Gastrocnemius medialis (tissue), 4 donors: ENCODE measurements at regions of chr9 and their contacts with region 1.

Region 1: GRCh38 chr9:110650991-110651411 is 17.6 kb upstream of the MUSK start:
- DNase-seq: no peak
- ATAC-seq: peak in 1 of 2 donors; percentile 18
- H3K4me3 ChIP-seq: no peak overlapping the region
- H3K27ac ChIP-seq: peak overlapping the region; percentile 43 to 63 (median 52)
- H3K4me1 ChIP-seq: peaks cover 4 to 8% of the 10 kb centered on the region in 2 donors
- H3K27me3 ChIP-seq: no peaks in the 10 kb centered on the region
- CTCF ChIP-seq: no peak
- POLR2A ChIP-seq: no peak

Region 2: DNA sequence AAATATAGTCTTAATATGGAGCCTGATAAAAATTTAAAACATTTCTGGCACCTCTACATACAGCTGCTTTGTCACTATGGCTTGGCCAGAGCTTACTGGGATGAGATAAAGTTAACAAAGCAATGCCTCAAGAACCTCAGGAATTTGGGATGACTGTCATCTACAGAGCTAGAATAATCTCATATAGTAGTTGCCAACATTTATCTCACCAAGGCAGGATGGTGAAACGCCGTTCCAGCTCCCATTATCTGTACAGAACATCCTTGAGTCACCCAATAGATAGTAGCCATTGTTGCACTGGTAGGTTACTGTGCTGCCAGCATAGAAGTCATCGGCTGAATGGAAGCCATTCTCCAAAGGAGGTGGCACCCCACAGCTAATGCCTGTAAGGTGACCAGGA is 218.7 kb before region 1 on chr9:
- in situ Hi-C with region 1: no loop called
- intact Hi-C with region 1: no loop called
- DNase-seq: no peak
- ATAC-seq: no peak
- H3K4me3 ChIP-seq: no peak overlapping the region
- H3K27ac ChIP-seq: no peak overlapping the region
- H3K4me1 ChIP-seq: no peaks in the 10 kb centered on the region
- H3K27me3 ChIP-seq: no peaks in the 10 kb centered on the region
- CTCF ChIP-seq: no peak
- POLR2A ChIP-seq: no peak

Region 3: DNA sequence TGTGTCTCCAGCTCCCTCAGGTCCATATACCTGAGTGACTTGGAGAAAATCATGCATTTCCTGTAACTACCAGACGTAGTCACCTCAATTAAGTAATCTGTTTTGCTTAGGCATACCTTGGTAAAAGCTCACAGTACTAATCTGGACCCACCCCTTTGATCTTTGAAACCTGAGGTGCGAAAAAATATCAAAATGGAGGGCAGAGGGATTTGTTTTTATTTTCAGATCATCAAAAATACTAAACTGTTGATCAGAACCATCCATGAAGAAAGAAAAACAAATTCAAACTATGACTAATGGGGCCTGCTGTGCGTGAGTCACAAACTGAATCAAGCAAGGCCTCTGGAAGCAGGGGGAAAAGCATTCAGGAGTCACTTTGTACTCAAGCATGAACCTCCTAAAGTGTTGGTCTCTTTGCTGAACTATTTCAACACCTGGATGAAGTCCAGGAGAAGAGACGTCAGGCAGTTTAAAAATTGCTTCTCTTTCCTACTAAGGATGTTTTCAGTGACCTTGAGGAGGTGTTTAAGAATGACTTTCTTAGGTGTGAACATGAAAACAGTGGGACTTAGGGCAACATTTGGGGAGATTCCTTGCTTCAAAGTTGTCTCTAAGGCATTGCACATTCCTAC is 93.9 kb after region 1 on chr9:
- in situ Hi-C with region 1: loop called in 2 of 4 experiments (anchors 10 kb)
- intact Hi-C with region 1: loop called (anchors 5 kb)
- DNase-seq: peak; percentile 56 to 74
- ATAC-seq: peak; percentile 87 to 88
- H3K4me3 ChIP-seq: no peak overlapping the region
- H3K27ac ChIP-seq: peak overlapping the region; percentile 83 to 88 (median 85)
- H3K4me1 ChIP-seq: peaks cover 16 to 31% of the 10 kb centered on the region in 2 donors
- H3K27me3 ChIP-seq: no peaks in the 10 kb centered on the region
- CTCF ChIP-seq: no peak
- POLR2A ChIP-seq: no peak

Region 4: DNA sequence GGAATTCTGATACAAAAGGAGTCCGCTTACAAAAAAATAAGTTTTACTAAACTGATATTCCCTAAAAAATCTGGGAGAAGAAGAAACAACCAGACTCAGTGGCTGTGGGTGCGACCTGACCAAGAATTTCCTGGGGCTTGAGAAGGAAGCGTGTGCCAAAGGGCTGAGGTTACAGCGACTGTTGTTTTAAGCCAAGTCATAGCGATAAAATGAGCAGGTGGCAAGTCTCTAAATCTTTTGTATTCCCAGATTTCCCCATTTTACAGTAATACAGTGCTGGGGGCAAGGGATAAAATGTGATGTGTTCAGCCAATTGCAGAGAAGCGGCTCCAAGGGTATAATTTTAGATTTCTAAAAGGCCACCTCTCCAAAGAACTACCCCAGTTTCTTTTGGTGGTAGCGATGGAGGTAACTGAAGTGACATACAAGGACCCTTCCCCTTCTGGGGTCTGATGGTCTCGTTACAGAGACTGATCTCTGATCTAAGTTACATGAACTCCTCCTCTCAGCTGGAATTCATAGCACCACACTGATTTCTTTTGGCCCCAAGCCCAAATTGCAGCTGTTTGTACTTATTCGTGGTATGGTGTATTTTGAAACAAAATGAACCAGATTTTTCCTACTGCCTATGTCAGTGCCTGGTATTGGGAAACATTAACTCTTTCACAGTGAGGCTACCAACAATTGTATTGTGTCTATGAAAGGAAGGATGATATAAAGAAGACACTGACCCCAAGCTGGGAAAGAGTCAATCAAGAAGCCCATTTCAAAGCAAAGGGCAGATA is 345.6 kb after region 1 on chr9:
- in situ Hi-C with region 1: no loop called
- intact Hi-C with region 1: loop called (anchors 10 kb)
- DNase-seq: peak; percentile 32 to 61
- ATAC-seq: peak; percentile 42 to 78
- H3K4me3 ChIP-seq: no peak overlapping the region
- H3K27ac ChIP-seq: peak overlapping the region; percentile 27 to 46 (median 44)
- H3K4me1 ChIP-seq: no peaks in the 10 kb centered on the region
- H3K27me3 ChIP-seq: no peaks in the 10 kb centered on the region
- CTCF ChIP-seq: no peak
- POLR2A ChIP-seq: no peak

Region 5: DNA sequence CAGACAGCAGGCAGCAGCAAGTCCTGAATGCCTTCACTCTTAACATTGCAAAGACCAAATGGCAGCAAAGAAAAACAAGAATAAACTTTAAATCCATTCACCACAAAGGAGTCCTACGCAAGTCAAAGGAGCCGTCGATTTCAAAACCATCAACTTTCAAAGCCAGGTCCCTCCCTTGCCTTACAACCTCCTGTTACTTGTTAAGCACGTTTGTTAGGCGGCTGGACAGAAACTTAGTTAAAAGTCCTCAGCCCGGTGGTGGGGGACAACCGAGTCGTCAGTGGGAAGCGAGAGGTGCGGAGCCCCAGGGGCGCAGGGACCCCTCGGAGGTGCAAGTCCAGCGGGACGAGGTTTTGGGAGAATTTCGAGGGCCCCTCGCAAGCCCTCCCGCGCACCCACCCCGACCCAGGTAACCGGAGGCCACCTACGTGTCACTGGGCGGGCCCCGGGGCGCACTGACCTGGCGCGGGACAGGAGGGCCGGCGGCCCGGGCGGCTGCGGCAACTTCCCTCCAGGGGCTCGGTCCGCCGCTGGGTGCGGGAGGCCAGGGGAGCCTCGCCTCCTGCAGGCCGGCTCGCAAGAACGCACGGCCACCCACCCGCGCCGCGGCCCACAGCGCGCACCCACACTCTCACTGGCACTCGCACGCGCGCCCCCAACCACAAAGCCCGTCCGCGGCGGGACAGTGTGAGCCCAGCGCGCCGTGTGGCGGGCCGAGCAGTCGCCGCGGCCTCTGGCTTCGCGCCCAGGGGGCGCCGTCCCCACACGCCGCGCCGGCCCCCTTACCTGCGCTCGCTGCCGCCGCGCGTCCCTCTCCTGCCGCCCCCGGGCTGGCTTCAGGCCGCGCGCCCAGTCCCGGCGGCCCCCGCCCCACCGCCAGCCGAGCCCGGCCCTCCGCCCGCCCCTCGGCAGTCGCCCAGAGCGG is 386.6 kb after region 1 on chr9:
- in situ Hi-C with region 1: no loop called
- intact Hi-C with region 1: loop called (anchors 10 kb)
- DNase-seq: no peak
- ATAC-seq: peak; percentile 12 to 15
- H3K4me3 ChIP-seq: peak overlapping the region; percentile 52 to 57 (median 54)
- H3K27ac ChIP-seq: peak overlapping the region; percentile 57 to 73 (median 69)
- H3K4me1 ChIP-seq: no peaks in the 10 kb centered on the region
- H3K27me3 ChIP-seq: peaks cover 21 to 35% (median 34%) of the 10 kb centered on the region in 3 donors
- CTCF ChIP-seq: no peak
- POLR2A ChIP-seq: peak in 1 of 2 donors; percentile 13